ENCODE measurements at regions of chr4 and their contacts with region 1.

Region 1: DNA sequence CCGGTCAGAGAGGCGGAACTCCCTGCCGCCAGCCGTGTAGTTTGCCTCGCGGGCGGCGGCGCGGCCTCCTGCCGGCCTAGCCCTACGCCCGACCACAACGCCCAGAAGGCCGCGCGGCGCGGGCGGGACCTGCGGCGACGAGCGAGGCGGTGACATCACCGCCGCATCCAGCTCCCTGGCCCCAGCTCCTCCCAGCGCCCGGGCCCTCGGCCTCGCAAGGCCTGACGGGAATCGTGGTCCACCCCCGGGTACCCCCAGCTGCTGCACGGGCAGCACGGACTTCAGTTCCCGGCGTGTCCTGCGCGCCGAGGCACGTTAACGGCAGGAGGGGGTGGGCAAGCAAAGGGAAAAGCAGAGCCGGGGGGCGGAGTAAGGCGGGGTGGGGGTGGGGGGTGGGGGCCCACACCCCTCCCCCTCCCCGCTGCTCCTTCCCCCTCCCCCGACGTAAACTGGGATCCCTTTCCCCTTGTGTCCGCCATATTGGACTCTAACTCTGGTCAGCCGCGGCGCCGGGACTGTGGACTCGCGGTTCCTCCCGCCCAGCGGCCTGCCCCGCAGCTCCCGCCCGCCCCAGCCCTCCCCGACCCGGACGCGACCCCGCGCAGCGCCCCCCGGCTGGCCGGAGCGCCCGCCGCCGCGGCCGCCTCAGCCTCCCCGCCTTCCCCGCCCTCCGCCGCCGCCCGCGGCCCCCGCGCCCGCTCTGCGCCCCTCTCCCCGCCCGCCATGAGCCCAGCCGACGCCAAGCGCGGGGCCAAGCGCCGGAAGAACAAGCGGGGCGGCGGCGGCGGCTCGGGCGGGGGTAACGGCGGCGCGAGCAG is at the start of gene FAM193A:
- DNase-seq: peak; percentile 99
- H3K4me3 Mint-ChIP-seq: peak within 1 kb of the TSS; percentile 81
- H3K27ac Mint-ChIP-seq: peak within 1 kb of the TSS; percentile 81
- H3K4me1 Mint-ChIP-seq: no peaks in the 10 kb centered on the region
- H3K27me3 Mint-ChIP-seq: no peaks in the 10 kb centered on the region
- CTCF ChIP-seq: no peak
- total RNA-seq, gene FAM193A: 30.7 and 31.3 TPM in 2 replicates

Region 2: DNA sequence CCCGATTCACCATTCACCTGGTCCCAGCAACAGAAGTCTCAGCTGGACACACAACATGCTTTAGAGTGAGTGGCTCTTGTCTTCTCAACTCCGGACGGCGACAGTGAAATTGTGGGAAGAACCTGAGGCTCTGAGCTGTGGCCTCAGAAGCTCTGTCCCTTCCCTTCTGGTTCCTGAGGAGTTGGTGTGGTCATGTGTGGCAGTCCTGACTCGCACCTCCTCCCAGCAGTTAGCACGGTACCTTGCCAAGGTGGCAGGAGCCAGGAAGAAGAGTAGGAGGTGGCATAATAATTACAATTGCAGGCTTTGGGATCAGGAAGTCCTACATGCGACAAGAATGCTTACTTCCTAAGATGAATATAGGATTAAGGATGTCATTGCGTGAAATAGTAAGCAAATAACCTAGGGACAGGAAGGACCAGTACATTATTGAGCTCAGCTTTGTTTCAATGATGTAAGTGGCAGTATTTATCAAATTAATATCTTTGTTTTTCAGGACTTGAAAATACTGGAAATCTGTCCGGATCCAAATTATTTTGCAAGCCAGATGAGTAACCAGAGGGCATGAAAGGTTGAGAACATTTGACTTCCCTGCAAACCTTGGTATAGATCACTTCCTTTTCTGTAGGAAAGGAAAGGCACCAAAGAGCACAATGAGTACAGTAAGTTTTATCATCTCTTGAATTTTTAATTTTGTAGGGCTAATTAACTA is 46.4 kb before region 1 on chr4:
- CTCF ChIA-PET with region 1: no interaction called
- POLR2A ChIA-PET with region 1: interaction called, 4 read pairs
- intact Hi-C with region 1: loop called (anchors 1 kb)
- DNase-seq: peak; percentile 22
- H3K4me3 Mint-ChIP-seq: peak overlapping the region; percentile 25
- H3K27ac Mint-ChIP-seq: peak overlapping the region; percentile 91
- H3K4me1 Mint-ChIP-seq: peaks cover 32% of the 10 kb centered on the region
- H3K27me3 Mint-ChIP-seq: no peaks in the 10 kb centered on the region
- CTCF ChIP-seq: no peak

Region 3: GRCh38 chr4:2583517-2583916 is 47.1 kb after region 1 on chr4:
- CTCF ChIA-PET with region 1: no interaction called
- POLR2A ChIA-PET with region 1: interaction called, 12 read pairs
- intact Hi-C with region 1: no loop called
- DNase-seq: peak; percentile 82
- H3K4me3 Mint-ChIP-seq: peak overlapping the region; percentile 56
- H3K27ac Mint-ChIP-seq: peak overlapping the region; percentile 0
- H3K4me1 Mint-ChIP-seq: peaks cover 36% of the 10 kb centered on the region
- H3K27me3 Mint-ChIP-seq: no peaks in the 10 kb centered on the region
- CTCF ChIP-seq: no peak

Region 4: GRCh38 chr4:2662598-2662997 is 126.2 kb after region 1 on chr4:
- CTCF ChIA-PET with region 1: no interaction called
- POLR2A ChIA-PET with region 1: interaction called, 4 read pairs
- intact Hi-C with region 1: loop called (anchors 10 kb)
- DNase-seq: peak; percentile 77
- H3K4me3 Mint-ChIP-seq: no peak overlapping the region
- H3K27ac Mint-ChIP-seq: peak overlapping the region; percentile 69
- H3K4me1 Mint-ChIP-seq: peaks cover 35% of the 10 kb centered on the region
- H3K27me3 Mint-ChIP-seq: no peaks in the 10 kb centered on the region
- CTCF ChIP-seq: no peak

Measured in MCF 10A (cell line).